ENCODE measurements at regions of chr2 and their contacts with region 1.

Region 1: DNA sequence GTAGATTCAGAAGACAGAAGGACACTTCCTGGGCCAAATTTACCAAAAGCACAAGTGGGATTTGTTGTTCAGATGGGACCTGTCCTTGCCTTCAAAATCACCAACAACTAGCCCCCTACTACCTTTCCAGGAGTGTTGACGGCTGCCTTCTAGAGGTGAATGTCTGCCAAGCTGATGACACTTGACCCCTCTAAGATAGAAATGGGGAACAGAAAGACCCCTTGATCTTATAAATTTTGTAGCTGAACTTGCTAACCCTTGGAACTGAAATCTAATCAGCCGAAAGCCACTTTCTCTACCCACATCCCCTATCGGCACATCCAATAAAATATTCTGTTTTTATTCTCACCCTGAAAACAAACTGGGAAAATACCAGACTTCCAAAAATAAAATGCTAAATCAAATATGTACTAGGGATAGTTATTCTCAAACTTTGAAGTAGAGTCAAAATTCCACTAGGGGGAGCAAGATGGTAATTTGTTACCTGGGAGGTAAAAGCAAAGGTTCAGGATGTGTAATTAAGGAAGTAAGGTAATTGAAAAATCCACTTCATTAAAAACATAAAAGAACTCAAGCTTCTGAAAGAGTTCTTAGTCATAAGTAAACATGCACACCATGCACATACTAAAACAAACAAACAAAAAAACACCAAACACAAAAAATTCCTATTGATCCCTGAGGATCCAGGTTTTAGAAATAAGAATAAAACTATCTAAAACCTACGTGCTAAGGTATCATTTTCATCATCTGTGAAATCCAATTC is 119.2 kb downstream of the ANKRD44 start:
- DNase-seq: peak; percentile 83
- ATAC-seq: peak; percentile 75
- H3K4me3 ChIP-seq: no peak overlapping the region
- H3K4me3 Mint-ChIP-seq: peak overlapping the region; percentile 2
- H3K27ac ChIP-seq: peak overlapping the region; percentile 27 to 62
- H3K27ac Mint-ChIP-seq: peak overlapping the region; percentile 80
- H3K4me1 ChIP-seq: peaks cover 47 to 53% of the 10 kb centered on the region in 2 donors
- H3K4me1 Mint-ChIP-seq: peaks cover 78% of the 10 kb centered on the region
- H3K27me3 ChIP-seq: no peaks in the 10 kb centered on the region
- H3K27me3 Mint-ChIP-seq: no peaks in the 10 kb centered on the region
- CTCF ChIP-seq: peak; percentile 85

Region 2: GRCh38 chr2:196983934-196984333 is 207.4 kb before region 1 on chr2:
- CTCF ChIA-PET with region 1: no interaction called
- POLR2A ChIA-PET with region 1: no interaction called
- intact Hi-C with region 1: no loop called
- DNase-seq: no peak
- ATAC-seq: no peak
- H3K4me3 ChIP-seq: no peak overlapping the region
- H3K4me3 Mint-ChIP-seq: no peak overlapping the region
- H3K27ac ChIP-seq: no peak overlapping the region
- H3K27ac Mint-ChIP-seq: no peak overlapping the region
- H3K4me1 ChIP-seq: peaks cover 3 to 6% of the 10 kb centered on the region in 2 donors
- H3K4me1 Mint-ChIP-seq: peaks cover 22% of the 10 kb centered on the region
- H3K27me3 ChIP-seq: no peaks in the 10 kb centered on the region
- H3K27me3 Mint-ChIP-seq: no peaks in the 10 kb centered on the region
- CTCF ChIP-seq: no peak

Region 3: GRCh38 chr2:197145471-197146138 is 45.8 kb before region 1 on chr2:
- CTCF ChIA-PET with region 1: interaction called, 15 read pairs
- POLR2A ChIA-PET with region 1: no interaction called
- intact Hi-C with region 1: no loop called
- DNase-seq: peak; percentile 93
- ATAC-seq: peak; percentile 88
- H3K4me3 ChIP-seq: no peak overlapping the region
- H3K4me3 Mint-ChIP-seq: peak overlapping the region; percentile 76
- H3K27ac ChIP-seq: peak overlapping the region; percentile 93 to 98
- H3K27ac Mint-ChIP-seq: peak overlapping the region; percentile 99
- H3K4me1 ChIP-seq: peaks cover 87 to 88% of the 10 kb centered on the region in 2 donors
- H3K4me1 Mint-ChIP-seq: peaks cover 82% of the 10 kb centered on the region
- H3K27me3 ChIP-seq: no peaks in the 10 kb centered on the region
- H3K27me3 Mint-ChIP-seq: no peaks in the 10 kb centered on the region
- CTCF ChIP-seq: no peak

Region 4: DNA sequence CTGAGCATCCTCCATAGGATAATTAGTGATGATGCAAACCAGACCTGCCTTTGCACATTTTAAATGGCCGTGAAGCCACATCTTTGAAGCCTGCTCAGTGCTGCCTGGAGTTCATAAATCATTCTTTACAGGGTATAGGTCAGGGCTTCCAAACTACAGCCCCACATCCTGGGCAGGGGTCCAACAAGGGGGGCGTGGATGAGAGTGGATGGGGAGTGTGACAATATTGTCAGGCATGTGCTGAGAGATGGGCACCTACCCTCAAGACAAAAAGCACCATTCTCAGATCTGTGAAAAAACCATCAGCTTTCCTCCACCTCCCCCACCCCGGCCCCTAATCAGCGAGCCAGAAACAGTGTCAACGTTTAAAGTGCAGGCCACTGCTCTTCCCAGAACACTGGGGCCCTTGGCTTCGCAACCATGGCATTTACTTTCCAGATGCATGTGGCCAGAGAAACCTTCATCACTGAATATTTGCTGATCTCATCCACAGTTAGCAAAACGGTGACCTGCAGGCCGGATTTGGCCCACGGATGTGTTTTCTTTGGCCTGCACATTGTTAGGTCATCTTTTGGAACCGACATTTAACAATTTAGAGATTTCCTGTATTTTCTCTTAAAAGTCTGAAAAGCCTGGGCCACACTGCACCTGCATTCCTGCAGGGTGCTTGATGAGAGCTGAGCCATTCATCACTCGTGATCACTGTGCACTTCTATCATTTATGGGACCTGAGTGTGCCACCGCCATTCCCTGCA is 11.4 kb before region 1 on chr2:
- CTCF ChIA-PET with region 1: interaction called, 15 read pairs
- POLR2A ChIA-PET with region 1: interaction called, 3 read pairs
- intact Hi-C with region 1: no loop called
- DNase-seq: no peak
- ATAC-seq: no peak
- H3K4me3 ChIP-seq: no peak overlapping the region
- H3K4me3 Mint-ChIP-seq: no peak overlapping the region
- H3K27ac ChIP-seq: no peak overlapping the region
- H3K27ac Mint-ChIP-seq: peak overlapping the region; percentile 38
- H3K4me1 ChIP-seq: peaks cover 23 to 32% of the 10 kb centered on the region in 2 donors
- H3K4me1 Mint-ChIP-seq: peaks cover 59% of the 10 kb centered on the region
- H3K27me3 ChIP-seq: no peaks in the 10 kb centered on the region
- H3K27me3 Mint-ChIP-seq: no peaks in the 10 kb centered on the region
- CTCF ChIP-seq: no peak

Region 5: GRCh38 chr2:197255543-197255942 is 64.2 kb after region 1 on chr2:
- CTCF ChIA-PET with region 1: interaction called, 9 read pairs
- POLR2A ChIA-PET with region 1: interaction called, 3 read pairs
- intact Hi-C with region 1: loop called (anchors 1 kb)
- DNase-seq: peak; percentile 91
- ATAC-seq: peak; percentile 97
- H3K4me3 ChIP-seq: peak overlapping the region; percentile 18 to 84 (median 49)
- H3K4me3 Mint-ChIP-seq: peak overlapping the region; percentile 87
- H3K27ac ChIP-seq: peak overlapping the region; percentile 90 to 93
- H3K27ac Mint-ChIP-seq: peak overlapping the region; percentile 90
- H3K4me1 ChIP-seq: peaks cover 69 to 74% of the 10 kb centered on the region in 2 donors
- H3K4me1 Mint-ChIP-seq: peaks cover 74% of the 10 kb centered on the region
- H3K27me3 ChIP-seq: no peaks in the 10 kb centered on the region
- H3K27me3 Mint-ChIP-seq: no peaks in the 10 kb centered on the region
- CTCF ChIP-seq: no peak

Region 6: DNA sequence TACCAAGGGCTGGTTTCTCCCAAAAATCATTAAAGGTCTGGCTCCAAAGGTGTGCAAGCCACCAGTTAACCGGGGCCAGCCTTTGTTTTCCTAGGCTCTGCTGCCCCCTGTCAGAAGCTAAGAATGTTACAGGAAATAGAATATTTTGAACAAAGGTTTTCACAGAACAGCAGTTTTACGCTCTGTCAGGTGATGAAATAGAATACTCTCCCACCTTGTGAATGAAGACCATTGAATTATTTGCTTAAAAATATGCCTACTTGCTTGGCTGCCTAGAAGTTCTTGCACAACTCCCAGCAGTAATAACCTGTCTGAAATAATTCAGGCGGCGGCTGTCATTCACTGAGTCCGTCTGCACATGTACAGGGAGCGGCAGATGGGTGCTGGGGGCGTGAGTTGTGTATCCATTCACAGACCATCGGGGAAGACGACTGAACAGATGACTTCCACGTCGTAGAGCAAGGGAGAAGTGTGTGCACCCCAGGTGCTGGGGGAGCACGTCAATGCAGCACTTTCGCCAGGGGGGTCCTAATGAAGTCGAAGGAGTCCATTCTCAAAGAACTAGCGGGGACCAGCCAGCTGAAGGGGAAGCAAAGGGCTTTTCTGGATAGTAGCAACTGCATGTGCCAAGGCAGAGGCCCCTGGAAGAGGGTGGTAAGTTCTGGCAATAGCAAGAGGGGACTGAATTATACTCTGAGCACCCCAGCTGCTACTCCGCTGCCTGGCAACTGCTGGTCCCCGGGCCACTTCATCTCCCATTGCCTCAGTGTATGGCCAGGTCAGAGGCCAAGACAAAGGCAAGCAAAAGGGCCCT is 187.3 kb after region 1 on chr2:
- CTCF ChIA-PET with region 1: interaction called, 9 read pairs
- POLR2A ChIA-PET with region 1: no interaction called
- intact Hi-C with region 1: loop called (anchors 1 kb)
- DNase-seq: peak; percentile 73
- ATAC-seq: peak; percentile 58
- H3K4me3 ChIP-seq: no peak overlapping the region
- H3K4me3 Mint-ChIP-seq: peak overlapping the region; percentile 21
- H3K27ac ChIP-seq: no peak overlapping the region
- H3K27ac Mint-ChIP-seq: no peak overlapping the region
- H3K4me1 ChIP-seq: peaks cover 0 to 6% of the 10 kb centered on the region in 2 donors
- H3K4me1 Mint-ChIP-seq: peaks cover 17% of the 10 kb centered on the region
- H3K27me3 ChIP-seq: peaks cover 0 to 3% (median 0%) of the 10 kb centered on the region in 4 experiments
- H3K27me3 Mint-ChIP-seq: no peaks in the 10 kb centered on the region
- CTCF ChIP-seq: peak; percentile 85